Activated CD4-positive, alpha-beta T cell treated with anti-CD3 and anti-CD28 coated beads for 36 hours (primary cell): ENCODE measurements at regions of chr19 and their contacts with region 1.

Region 1: GRCh38 chr19:52637718-52638585 is at the start of gene ZNF83:
- DNase-seq: peak; percentile 99
- ATAC-seq: peak; percentile 97
- H3K4me3 Mint-ChIP-seq: peak within 1 kb of the TSS; percentile 92
- H3K27ac Mint-ChIP-seq: peak within 1 kb of the TSS; percentile 96
- H3K4me1 Mint-ChIP-seq: peaks cover 13% of the 10 kb centered on the region
- H3K27me3 Mint-ChIP-seq: no peaks in the 10 kb centered on the region
- total RNA-seq, gene ZNF83: 23.8 to 27.5 TPM

Region 2: GRCh38 chr19:52269338-52270261 is 368.4 kb before region 1 on chr19 and contains the start of gene ZNF766:
- CTCF ChIA-PET with region 1: no interaction called
- POLR2A ChIA-PET with region 1: no interaction called
- intact Hi-C with region 1: loop called in 1 of 2 experiments (anchors 1 kb)
- DNase-seq: peak; percentile 98
- ATAC-seq: peak; percentile 99
- H3K4me3 Mint-ChIP-seq: peak within 1 kb of the TSS; percentile 96
- H3K27ac Mint-ChIP-seq: peak within 1 kb of the TSS; percentile 96
- H3K4me1 Mint-ChIP-seq: peaks cover 35% of the 10 kb centered on the region
- H3K27me3 Mint-ChIP-seq: no peaks in the 10 kb centered on the region
- total RNA-seq, gene ZNF766: 28.6 to 34.2 TPM

Region 3: DNA sequence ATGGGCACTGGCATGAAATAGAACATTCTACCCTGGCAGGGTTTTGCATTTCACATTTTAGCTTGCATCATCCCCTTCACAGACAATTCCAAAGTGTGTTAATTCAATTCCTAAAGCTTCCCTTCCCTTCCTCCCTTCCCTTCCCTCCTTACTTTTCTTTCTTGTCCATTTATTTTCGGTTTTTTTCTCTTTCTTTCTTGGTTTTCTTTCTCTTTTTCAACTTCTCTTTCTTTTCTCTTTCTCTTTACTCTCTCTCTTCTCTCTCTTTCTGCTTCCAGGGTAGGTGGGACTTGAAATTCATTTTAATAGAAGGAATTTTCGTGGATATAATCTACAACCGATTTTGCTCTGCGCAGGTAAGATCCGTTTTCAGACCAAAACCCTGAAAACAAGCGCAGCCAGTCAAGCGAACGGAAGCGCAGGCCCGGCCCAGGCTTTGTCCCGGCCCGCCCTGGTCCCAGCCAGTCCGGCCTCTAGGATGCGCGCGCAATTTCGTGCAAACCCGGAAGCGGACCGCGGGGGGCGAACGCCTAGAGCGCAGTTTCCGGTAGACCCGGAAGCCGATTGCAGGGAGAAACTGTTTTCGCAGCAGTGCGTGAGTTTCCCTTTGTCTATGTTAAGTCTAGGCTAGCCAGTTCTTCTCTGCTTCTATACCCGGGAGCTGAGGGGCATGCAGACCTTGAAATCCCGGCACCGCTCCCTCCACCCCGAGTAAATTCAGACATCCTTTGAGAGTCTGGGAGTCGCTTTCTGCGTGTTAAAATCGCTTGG is 240.5 kb before region 1 on chr19 and contains the start of gene ZNF528:
- CTCF ChIA-PET with region 1: no interaction called
- POLR2A ChIA-PET with region 1: no interaction called
- intact Hi-C with region 1: loop called in 1 of 2 experiments (anchors 1 kb)
- DNase-seq: peak; percentile 98
- ATAC-seq: peak; percentile 100
- H3K4me3 Mint-ChIP-seq: peak within 1 kb of the TSS; percentile 79
- H3K27ac Mint-ChIP-seq: peak within 1 kb of the TSS; percentile 94
- H3K4me1 Mint-ChIP-seq: peaks cover 14% of the 10 kb centered on the region
- H3K27me3 Mint-ChIP-seq: no peaks in the 10 kb centered on the region
- total RNA-seq, gene ZNF528: 8.2 to 8.6 TPM

Region 4: GRCh38 chr19:52570000-52570861 is 67.7 kb before region 1 on chr19 and contains the start of gene ZNF701:
- CTCF ChIA-PET with region 1: no interaction called
- POLR2A ChIA-PET with region 1: no interaction called
- intact Hi-C with region 1: loop called in 1 of 2 experiments (anchors 1 kb)
- DNase-seq: peak; percentile 98
- ATAC-seq: peak; percentile 99
- H3K4me3 Mint-ChIP-seq: peak within 1 kb of the TSS; percentile 88
- H3K27ac Mint-ChIP-seq: peak within 1 kb of the TSS; percentile 96
- H3K4me1 Mint-ChIP-seq: peaks cover 27% of the 10 kb centered on the region
- H3K27me3 Mint-ChIP-seq: no peaks in the 10 kb centered on the region
- total RNA-seq, gene ZNF701: 19.0 to 21.5 TPM

Region 5: DNA sequence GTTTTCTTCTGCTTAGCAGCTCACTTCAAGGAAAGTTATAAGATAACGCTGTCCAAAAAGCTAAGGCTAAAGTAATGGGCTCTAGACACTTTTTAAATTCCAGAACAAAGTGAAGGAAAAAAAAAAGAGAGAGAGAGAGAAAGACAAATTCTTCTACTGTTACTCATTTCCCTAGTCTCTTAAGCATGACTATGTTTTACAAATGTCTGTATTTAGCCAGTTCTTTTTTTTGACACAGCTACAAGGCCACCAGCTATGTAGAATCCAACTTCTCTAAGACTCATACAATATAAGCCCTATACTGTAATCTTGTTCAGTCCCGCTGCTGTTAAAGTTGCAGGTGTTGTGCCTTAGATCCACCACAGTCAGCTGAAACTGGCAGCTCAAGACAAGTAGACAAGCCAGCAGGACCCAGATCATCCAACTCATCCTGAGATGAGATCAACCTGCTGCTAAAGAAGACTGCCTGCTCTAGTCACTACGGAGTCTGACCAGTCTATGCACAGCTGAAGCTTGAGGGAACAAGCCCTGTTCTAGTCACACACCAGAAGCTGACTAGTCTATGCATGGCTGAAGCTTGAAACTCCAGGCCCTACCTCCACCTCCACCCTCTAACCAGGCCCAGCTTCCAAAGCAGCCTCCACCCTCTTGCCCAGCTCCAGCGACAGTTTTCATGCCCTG is 10.5 kb after region 1 on chr19:
- CTCF ChIA-PET with region 1: no interaction called
- POLR2A ChIA-PET with region 1: no interaction called
- intact Hi-C with region 1: no loop called
- DNase-seq: no peak
- ATAC-seq: no peak
- H3K4me3 Mint-ChIP-seq: no peak overlapping the region
- H3K27ac Mint-ChIP-seq: no peak overlapping the region
- H3K4me1 Mint-ChIP-seq: no peaks in the 10 kb centered on the region
- H3K27me3 Mint-ChIP-seq: no peaks in the 10 kb centered on the region

Region 6: GRCh38 chr19:52690369-52691214 is 52.6 kb after region 1 on chr19:
- CTCF ChIA-PET with region 1: no interaction called
- POLR2A ChIA-PET with region 1: no interaction called
- intact Hi-C with region 1: loop called in 1 of 2 experiments (anchors 1 kb)
- DNase-seq: peak; percentile 96
- ATAC-seq: peak; percentile 95
- H3K4me3 Mint-ChIP-seq: peak overlapping the region; percentile 90
- H3K27ac Mint-ChIP-seq: peak overlapping the region; percentile 96
- H3K4me1 Mint-ChIP-seq: peaks cover 27% of the 10 kb centered on the region
- H3K27me3 Mint-ChIP-seq: no peaks in the 10 kb centered on the region

Region 7: DNA sequence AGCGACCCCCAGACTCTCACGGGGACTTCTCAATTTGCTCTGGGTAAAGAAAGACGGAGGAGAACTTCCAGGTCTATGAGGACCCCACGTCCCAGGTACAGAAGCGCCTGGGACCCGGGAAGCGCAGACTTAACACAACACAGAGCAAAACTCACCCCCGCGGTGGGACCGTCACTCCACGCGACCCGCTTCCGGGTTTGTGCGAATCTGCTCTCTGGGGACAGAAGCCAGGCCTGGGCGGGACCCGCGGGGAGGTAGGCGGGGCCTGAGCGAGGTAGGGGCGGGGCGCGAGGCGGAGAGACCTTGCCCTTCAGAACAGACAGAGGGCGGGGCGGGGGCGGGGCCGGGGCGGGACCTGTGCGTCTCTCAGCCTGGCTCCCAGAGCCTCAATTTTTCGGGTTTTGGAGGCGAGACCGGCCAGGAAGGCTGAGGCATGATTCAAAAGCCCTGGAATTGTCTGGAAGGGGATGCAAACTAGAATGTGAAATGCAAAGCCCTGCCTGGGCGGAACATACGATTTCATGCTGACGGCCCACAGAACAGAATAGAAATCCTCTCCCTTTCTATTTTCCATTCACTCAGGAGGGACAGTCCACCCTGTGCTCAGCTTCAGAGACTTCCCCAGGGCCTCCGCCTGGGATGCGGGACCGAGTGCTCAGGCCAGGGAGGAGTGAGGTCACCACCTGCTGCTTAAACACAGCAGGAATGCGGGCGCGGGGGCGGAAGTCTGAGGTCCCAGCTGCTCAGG is 304.6 kb after region 1 on chr19:
- CTCF ChIA-PET with region 1: no interaction called
- POLR2A ChIA-PET with region 1: no interaction called
- intact Hi-C with region 1: loop called in 1 of 2 experiments (anchors 1 kb)
- DNase-seq: peak; percentile 97
- ATAC-seq: peak; percentile 99
- H3K4me3 Mint-ChIP-seq: peak overlapping the region; percentile 90
- H3K27ac Mint-ChIP-seq: peak overlapping the region; percentile 91
- H3K4me1 Mint-ChIP-seq: peaks cover 18% of the 10 kb centered on the region
- H3K27me3 Mint-ChIP-seq: no peaks in the 10 kb centered on the region

Region 8: GRCh38 chr19:53365134-53365898 is 727.4 kb after region 1 on chr19 and contains the start of gene ZNF525:
- CTCF ChIA-PET with region 1: no interaction called
- POLR2A ChIA-PET with region 1: no interaction called
- intact Hi-C with region 1: loop called in 1 of 2 experiments (anchors 1 kb)
- DNase-seq: peak; percentile 98
- ATAC-seq: peak; percentile 100
- H3K4me3 Mint-ChIP-seq: peak within 1 kb of the TSS; percentile 93
- H3K27ac Mint-ChIP-seq: peak within 1 kb of the TSS; percentile 95
- H3K4me1 Mint-ChIP-seq: peaks cover 26% of the 10 kb centered on the region
- H3K27me3 Mint-ChIP-seq: no peaks in the 10 kb centered on the region
- total RNA-seq, gene ZNF525: 21.5 to 27.8 TPM